ENCODE measurements at regions of chr9 and their contacts with region 1.

Region 1: GRCh38 chr9:34899535-34900158 is 58.4 kb upstream of the PHF24 start:
- DNase-seq: no peak
- H3K4me3 ChIP-seq: no peak overlapping the region
- CTCF ChIP-seq: peak; percentile 83

Region 2: GRCh38 chr9:34884732-34885131 is 14.9 kb before region 1 on chr9:
- CTCF ChIA-PET with region 1: interaction called, 40 read pairs
- POLR2A ChIA-PET with region 1: no interaction called
- DNase-seq: no peak
- H3K4me3 ChIP-seq: no peak overlapping the region
- CTCF ChIP-seq: no peak

Region 3: DNA sequence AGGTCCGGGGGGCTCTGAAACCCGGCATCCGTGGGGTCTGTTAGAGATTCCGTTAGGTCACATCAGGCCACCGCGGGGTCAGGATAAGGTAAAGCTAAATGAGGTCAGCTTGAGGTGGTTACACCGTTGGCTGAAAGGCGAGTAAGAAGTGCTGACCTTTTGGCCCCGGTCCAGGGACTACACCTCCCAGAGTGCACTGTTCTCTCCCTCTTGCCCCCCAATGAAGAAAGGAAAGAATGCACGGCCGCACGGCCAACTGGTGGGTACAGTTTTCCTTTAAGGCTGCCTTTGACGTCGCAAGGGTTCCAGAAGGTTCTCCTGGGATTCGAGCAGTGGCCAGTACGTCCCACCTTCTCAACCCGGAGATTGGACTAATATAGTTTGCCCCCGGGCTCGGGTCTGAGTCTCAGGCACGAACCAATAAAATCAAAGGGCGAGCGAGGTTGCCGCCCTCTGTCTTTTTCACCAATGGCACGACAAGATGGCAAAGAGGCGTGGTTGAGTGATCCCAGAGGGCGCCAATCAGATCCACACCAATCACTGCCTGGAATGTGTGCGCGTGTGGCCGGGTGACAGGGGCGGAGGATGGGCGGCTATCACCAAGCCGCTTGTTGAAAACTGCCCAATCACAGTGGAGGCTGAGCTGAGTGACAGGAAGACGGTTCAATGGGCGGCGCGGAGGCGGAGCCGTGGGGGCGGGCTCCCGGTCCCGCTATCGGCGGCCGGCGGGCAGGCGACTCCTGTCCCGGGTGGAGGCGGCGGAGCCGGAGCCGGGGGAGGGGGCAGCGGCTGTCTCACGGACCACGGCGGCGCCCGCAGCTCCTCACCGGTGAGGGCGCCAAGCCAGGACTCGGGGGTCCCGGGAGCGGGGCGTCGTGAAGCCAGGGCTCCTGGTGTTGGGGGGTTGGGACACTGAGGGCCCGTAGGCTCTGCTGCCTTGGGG is 89.6 kb after region 1 on chr9 and contains the start of gene DNAJB5:
- CTCF ChIA-PET with region 1: interaction called, 54 read pairs
- POLR2A ChIA-PET with region 1: interaction called, 3 read pairs
- DNase-seq: peak; percentile 99
- H3K4me3 ChIP-seq: peak within 1 kb of the TSS; percentile 88
- CTCF ChIP-seq: no peak

Region 4: GRCh38 chr9:35042081-35042604 is 142.5 kb after region 1 on chr9:
- CTCF ChIA-PET with region 1: interaction called, 14 read pairs
- POLR2A ChIA-PET with region 1: no interaction called
- DNase-seq: no peak
- H3K4me3 ChIP-seq: no peak overlapping the region
- CTCF ChIP-seq: no peak

Region 5: DNA sequence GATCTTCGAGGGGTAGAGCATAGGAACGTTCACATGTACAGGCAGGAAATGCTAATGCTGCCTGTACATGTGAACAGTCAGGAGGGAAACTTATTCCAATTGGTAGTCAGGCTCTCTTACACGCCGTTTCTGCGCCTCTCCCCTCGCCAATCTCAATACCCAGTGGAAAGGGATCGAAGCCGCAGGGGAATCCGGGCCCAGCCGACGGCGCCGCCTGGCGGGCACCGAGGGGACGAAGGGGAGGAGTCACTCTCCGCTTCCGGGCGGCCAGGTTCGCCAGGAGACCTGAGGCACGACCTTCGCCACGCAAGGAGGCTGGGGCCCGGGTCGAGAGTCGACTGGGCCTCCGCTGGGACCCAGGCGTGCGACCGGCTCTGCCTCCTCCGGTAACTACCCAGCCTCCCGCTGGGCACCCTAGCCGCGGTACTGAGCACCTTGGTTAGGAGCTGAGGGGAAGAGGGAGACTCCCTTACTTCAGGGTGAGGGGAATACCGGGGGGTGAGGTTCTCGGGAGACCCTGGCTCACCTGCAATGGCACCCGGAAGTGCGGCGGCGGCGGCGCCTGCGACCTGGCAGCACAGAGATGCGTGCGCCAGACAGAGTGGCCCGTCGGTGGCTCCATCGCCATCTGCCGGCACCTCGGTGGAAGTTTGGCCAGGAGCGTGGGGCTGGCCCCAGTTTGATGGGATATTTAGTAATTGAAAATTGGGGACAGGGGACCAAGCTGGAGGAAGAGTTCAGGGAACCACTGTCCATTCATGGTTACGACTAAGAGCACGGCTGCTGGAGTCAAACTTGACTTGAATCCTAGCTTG is 196.6 kb after region 1 on chr9 and contains the start of gene PIGO:
- CTCF ChIA-PET with region 1: interaction called, 209 read pairs
- POLR2A ChIA-PET with region 1: interaction called, 7 read pairs
- DNase-seq: no peak
- H3K4me3 ChIP-seq: peak within 1 kb of the TSS; percentile 99
- CTCF ChIP-seq: peak; percentile 97

Region 6: GRCh38 chr9:35258676-35259474 is 359.2 kb after region 1 on chr9:
- CTCF ChIA-PET with region 1: interaction called, 16 read pairs
- POLR2A ChIA-PET with region 1: no interaction called
- DNase-seq: peak; percentile 12
- H3K4me3 ChIP-seq: no peak overlapping the region
- CTCF ChIP-seq: peak; percentile 58

Measured in AG04449 (cell line).